GM10248 (cell line): ENCODE measurements at regions of chr7 and their contacts with region 1.

Region 1: DNA sequence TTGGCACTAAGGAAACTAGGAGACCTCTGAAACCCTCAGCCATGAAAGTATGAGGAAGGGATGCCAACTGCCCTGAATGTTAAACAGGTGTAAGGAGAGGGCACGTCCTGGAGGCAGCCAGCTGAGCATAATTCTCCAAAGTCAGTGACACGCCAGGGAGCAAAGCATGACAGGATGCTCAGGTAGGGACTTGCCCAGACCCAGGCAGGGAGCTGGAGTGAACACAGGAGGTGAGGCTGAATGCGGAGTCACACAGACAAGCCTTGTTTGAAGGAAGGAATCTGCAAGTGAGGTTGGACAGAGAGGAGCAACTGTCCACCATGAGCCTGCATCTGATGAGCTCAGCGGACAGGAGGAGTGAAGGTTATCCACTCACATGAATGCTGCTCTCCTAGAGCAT is 41.5 kb downstream of the KLRG2 start:
- DNase-seq: no peak
- CTCF ChIP-seq: no peak

Region 2: DNA sequence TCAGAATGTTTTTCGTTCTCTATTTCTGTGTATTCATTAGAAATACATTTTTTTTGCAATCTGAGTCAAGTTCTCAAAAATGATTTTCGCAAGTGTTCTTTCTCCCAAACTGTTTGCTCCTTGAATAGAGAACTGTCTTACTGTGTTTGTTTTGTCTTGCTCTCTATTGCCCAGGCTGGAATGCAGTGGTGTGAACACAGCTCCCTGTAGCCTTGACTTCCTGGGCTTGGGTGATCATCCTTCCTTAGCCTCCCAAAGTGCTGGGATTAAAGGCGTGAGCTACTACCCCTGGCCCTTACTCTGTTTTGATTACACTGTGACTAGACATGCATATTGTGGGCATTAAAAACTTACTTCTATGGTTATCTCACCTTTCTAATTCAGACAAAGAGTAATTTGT is 25.6 kb before region 1 on chr7:
- CTCF ChIA-PET with region 1: interaction called, 95 read pairs
- POLR2A ChIA-PET with region 1: no interaction called
- DNase-seq: no peak
- CTCF ChIP-seq: no peak

Region 3: DNA sequence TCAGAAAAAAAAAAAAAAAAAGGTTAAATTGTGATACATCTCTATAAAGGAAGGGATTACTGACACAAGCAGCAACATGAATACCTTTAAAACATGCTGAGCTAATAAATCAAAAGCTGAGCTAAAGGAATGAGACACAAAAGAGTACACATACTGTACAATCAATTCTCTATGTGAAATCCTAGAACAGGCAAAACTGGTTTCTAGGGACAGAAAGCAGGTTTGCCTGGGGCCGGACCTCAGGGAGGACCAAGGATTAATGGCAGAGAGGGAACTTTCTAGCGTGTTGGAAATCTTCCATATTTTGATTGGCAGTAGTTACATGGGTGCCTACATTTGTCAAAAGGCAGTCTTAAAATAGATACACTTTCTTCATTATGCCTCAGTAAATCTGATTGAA is 11.0 kb before region 1 on chr7:
- CTCF ChIA-PET with region 1: interaction called, 25 read pairs
- POLR2A ChIA-PET with region 1: no interaction called
- DNase-seq: no peak
- CTCF ChIP-seq: no peak

Region 4: DNA sequence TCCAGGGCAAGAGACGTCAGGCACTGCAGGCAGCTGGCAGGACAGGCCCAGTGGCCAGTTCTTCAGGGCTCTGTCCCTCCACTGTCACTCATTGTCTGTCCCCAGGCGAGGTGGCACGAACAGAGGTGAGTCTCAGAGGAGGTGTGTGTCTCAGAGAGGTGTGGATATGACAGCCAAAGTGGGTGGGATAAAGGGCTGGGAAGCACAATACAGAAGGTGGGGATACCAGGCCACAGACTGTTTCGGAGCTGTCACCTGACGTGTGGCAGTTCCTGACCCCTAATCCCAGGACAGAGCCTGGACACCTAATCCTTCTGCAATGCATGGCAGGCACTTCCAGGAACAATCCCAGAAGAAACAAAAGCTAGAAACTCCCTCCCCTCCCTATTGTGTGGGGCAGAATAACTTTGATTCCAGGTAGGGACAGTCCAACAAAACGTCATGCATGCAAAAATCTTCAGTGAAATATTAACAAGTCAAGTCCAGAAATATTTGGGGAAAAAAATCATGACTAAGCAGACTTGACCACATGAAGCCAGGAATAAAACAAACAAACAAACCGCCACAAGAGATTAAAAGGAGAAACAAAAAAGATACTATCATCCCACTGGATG is 29.9 kb after region 1 on chr7:
- CTCF ChIA-PET with region 1: no interaction called
- POLR2A ChIA-PET with region 1: no interaction called
- DNase-seq: no peak
- CTCF ChIP-seq: no peak